ENCODE measurements at regions of chr2 and their contacts with region 1.

Region 1: DNA sequence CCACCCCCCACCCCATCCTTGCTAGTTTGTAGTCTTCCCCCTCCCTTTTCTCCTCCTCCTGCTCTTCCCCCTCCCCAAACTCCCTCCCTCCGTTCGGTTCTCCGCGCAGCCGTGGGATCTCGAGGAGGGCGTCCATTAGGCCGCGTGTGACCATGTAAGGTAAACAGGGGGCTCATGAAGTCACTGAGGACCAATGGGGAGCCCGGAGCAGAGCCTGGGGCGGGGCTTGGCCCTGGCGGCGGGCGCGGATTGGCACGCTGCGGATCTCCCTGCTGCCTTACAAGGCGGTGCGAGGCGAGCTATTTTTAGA is 246 bp upstream of the KLF7 start:
- DNase-seq: peak; percentile 98
- ATAC-seq: peak; percentile 81
- H3K4me3 ChIP-seq: peak overlapping the region; percentile 94
- H3K27ac ChIP-seq: peak overlapping the region; percentile 81
- H3K4me1 ChIP-seq: peaks cover 40% of the 10 kb centered on the region
- H3K27me3 ChIP-seq: no peaks in the 10 kb centered on the region
- CTCF ChIP-seq: no peak

Region 2: DNA sequence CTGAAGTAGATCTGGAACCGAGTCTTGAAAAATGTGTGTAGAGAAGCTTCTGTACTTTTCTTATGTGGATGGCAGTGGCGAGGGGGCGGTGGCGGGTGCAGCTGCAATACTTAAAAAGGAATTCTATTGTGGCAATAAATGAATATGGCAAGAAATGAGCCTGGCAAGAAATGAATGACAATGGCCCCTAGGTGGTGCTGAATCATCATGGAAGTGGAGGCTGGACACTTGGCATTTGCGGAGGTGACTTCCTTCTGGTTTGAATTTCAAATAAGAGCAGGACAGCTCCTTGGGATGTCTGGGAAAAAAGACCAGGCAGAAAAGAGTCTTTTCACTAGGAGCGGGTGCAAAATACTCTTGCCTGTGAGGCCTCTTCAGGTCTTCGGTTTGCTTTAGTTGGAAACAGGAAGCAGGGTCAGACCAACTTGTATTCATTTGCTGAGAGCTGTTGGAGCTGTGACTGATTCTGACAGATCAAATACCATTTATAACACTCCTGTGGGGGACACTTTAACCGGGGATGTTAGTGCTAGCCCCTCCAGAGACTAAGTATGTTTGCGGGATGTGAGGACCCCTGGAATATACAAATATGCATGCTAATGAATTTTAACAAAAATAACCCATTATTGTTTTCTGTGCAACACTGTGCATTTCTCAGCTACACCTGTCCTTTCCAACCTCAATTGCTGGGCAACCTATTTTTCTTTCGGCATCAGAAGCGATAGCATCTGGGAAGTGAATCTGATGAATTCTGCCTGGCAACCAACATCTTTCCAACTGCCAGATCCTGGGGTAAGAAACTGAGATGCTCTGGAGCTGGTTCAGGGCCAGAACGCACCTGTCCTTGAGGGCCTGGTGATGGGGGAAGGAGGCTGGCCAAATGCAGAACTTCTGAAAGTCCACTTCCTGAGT is 365.2 kb before region 1 on chr2:
- CTCF ChIA-PET with region 1: no interaction called
- POLR2A ChIA-PET with region 1: no interaction called
- intact Hi-C with region 1: loop called (anchors 10 kb)
- DNase-seq: peak; percentile 82
- ATAC-seq: peak; percentile 84
- H3K4me3 ChIP-seq: no peak overlapping the region
- H3K27ac ChIP-seq: no peak overlapping the region
- H3K4me1 ChIP-seq: 0 out of 2 replicates have a peak, but pooled peaks cover 6% of the 10 kb centered on the region
- H3K27me3 ChIP-seq: no peaks in the 10 kb centered on the region
- CTCF ChIP-seq: peak; percentile 89

Region 3: GRCh38 chr2:207153266-207153975 is 12.6 kb before region 1 on chr2:
- CTCF ChIA-PET with region 1: no interaction called
- POLR2A ChIA-PET with region 1: interaction called, 3 read pairs
- intact Hi-C with region 1: loop called (anchors 1 kb)
- DNase-seq: peak; percentile 55
- ATAC-seq: peak; percentile 89
- H3K4me3 ChIP-seq: peak overlapping the region; percentile 35; the same call in 1 of the 2 replicates
- H3K27ac ChIP-seq: peak overlapping the region; percentile 61
- H3K4me1 ChIP-seq: peaks cover 26% of the 10 kb centered on the region
- H3K27me3 ChIP-seq: no peaks in the 10 kb centered on the region
- CTCF ChIP-seq: no peak

Region 4: DNA sequence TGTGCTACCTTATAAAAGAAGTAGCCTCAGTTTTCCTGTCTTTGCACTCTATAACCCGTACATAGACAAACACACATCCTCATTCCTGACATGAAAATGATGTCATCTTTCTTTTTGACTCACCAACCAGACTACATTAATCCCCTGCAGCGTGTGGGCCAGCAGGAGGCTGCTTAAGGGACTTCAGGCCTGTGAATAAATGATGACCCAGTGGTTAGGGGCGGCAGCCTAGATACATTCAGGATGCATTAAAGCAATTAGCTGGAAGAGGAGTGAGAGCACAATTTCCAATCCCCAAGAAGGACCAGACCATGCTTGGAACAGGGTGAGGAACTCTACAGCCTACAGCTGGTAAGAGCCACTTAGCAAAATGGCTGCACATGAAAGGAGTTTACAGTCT is 57.1 kb after region 1 on chr2:
- CTCF ChIA-PET with region 1: interaction called, 3 read pairs
- POLR2A ChIA-PET with region 1: interaction called, 3 read pairs
- intact Hi-C with region 1: loop called (anchors 1 kb)
- DNase-seq: peak; percentile 41
- ATAC-seq: no peak
- H3K4me3 ChIP-seq: no peak overlapping the region
- H3K27ac ChIP-seq: no peak overlapping the region
- H3K4me1 ChIP-seq: peaks cover 26% of the 10 kb centered on the region
- H3K27me3 ChIP-seq: no peaks in the 10 kb centered on the region
- CTCF ChIP-seq: no peak

Region 5: DNA sequence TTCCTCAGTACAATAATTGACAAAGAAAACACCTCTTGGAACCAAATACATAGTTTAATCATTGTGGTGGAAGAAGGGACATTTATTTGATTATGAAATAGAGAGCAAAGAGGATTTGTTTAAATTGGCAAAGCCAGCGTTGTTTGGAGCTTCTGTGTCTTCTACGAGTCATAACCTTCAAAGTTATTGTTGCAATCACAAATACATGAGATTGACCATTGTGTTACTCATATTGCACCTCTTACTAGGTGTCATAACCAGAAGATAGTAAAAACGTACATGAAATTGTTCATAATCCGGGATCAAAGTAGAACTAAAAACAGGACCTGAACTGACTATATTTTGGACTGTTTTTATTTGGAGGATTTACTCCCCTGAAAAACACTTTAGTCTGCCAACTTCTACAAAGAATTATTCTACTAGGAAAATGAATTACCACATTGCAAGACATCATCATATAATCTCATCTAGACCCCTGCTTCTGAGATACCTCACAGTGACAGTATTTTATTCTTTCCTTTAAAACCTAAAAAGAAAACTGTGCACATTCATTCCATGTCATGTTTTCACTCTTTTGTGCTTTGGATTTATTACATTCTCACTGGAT is 151.5 kb after region 1 on chr2:
- CTCF ChIA-PET with region 1: no interaction called
- POLR2A ChIA-PET with region 1: no interaction called
- intact Hi-C with region 1: loop called (anchors 5 kb)
- DNase-seq: peak; percentile 58
- ATAC-seq: peak; percentile 77
- H3K4me3 ChIP-seq: no peak overlapping the region
- H3K27ac ChIP-seq: no peak overlapping the region
- H3K4me1 ChIP-seq: peaks cover 16% of the 10 kb centered on the region
- H3K27me3 ChIP-seq: no peaks in the 10 kb centered on the region
- CTCF ChIP-seq: no peak

Region 6: DNA sequence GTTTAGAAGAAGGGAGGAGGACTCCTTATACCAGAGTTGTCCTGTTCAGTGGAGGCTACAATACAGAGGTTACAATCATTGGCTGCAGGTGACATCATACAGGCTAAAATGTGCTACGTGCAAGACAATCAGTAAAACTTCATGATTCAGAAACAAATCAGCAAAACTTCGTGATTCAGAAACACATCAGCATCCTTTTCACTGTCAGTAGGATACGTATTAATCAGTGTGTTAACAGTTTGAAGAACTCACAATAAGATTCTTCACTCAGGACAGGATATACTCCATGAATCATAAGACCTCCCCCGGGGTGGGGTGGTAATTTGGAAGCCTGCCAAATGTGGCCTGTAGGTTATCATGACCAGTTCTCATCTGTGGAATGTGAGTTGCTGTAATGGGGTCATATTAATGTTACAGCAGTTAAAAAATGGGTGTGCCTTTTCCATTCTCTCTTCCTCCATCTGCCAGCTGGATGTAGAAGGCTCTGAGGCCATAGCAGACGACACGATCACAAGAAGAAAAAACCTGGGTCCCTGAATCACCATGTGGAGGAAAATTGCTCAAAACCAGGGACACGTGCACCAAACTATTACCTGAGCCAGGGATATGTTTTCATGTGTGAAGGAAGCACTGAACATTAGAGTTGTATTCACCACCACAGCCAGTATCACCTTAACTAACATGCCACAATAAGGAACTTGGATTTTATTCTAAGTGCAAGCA is 229.0 kb after region 1 on chr2:
- CTCF ChIA-PET with region 1: interaction called, 3 read pairs
- POLR2A ChIA-PET with region 1: no interaction called
- intact Hi-C with region 1: loop called (anchors 2 kb)
- DNase-seq: peak; percentile 99
- ATAC-seq: peak; percentile 86
- H3K4me3 ChIP-seq: peak overlapping the region; percentile 40
- H3K27ac ChIP-seq: peak overlapping the region; percentile 99
- H3K4me1 ChIP-seq: peaks cover 23% of the 10 kb centered on the region
- H3K27me3 ChIP-seq: no peaks in the 10 kb centered on the region
- CTCF ChIP-seq: no peak

Region 7: DNA sequence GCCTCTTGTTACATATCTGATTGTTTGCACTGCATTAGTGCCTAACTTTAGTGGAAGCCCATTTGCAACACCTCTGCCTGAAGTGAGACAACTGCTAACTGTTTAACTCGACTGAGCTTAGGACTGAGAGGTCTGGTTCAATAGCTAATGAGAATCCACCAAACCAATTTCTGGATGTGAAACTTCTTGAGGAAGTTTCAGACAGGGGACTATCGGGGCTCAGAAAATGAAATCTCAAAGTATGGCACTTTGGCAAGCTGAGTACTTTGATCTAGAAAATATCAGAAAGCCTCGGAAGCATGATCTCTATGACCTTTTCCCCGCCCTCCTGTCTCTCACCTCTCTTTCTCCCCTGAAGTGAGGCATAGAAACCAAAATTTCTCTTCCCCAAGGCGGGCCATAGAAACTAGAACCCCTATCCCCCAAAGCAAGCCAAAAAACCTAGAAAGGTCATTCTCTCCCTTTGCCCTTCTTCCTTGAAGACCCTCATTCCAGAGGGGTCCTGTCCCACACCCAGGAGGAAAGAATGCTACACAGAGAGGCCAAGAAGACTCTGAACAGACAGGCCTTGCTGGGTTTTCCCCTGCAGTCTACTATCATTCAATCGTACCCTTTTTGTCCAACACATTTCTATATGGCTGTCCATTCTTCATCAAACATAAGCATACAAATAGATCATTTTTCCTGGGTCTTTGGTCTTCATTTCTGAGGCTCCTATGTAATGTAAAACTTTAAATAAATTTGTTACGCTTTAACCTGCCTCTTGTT is 294.2 kb after region 1 on chr2:
- CTCF ChIA-PET with region 1: no interaction called
- POLR2A ChIA-PET with region 1: no interaction called
- intact Hi-C with region 1: no loop called
- DNase-seq: no peak
- ATAC-seq: no peak
- H3K4me3 ChIP-seq: no peak overlapping the region
- H3K27ac ChIP-seq: no peak overlapping the region
- H3K4me1 ChIP-seq: no peaks in the 10 kb centered on the region
- H3K27me3 ChIP-seq: no peaks in the 10 kb centered on the region
- CTCF ChIP-seq: no peak

Measured in PC-3 (cell line).